CD4-positive, alpha-beta T cell (primary cell): ENCODE measurements at regions of chr12 and their contacts with region 1.

Region 1: GRCh38 chr12:48454667-48455066 is 17.7 kb upstream of the ANP32D start:
- DNase-seq: peak in 3 of 14 experiments; percentile 46 to 59 (median 51)
- ATAC-seq: peak; percentile 65
- H3K4me3 ChIP-seq: no peak overlapping the region
- H3K4me3 Mint-ChIP-seq: no peak overlapping the region
- H3K27ac ChIP-seq: no peak overlapping the region
- H3K27ac Mint-ChIP-seq: no peak overlapping the region
- H3K4me1 ChIP-seq: no peaks in the 10 kb centered on the region
- H3K4me1 Mint-ChIP-seq: no peaks in the 10 kb centered on the region
- H3K27me3 ChIP-seq: no peaks in the 10 kb centered on the region
- H3K27me3 Mint-ChIP-seq: peaks cover 21% of the 10 kb centered on the region
- CTCF ChIP-seq: peak; percentile 58

Region 2: GRCh38 chr12:47935184-47935583 is 519.5 kb before region 1 on chr12:
- CTCF ChIA-PET with region 1: no interaction called
- POLR2A ChIA-PET with region 1: no interaction called
- intact Hi-C with region 1: loop called in 1 of 2 experiments (anchors 10 kb)
- DNase-seq: no peak
- ATAC-seq: no peak
- H3K4me3 ChIP-seq: no peak overlapping the region
- H3K4me3 Mint-ChIP-seq: no peak overlapping the region
- H3K27ac ChIP-seq: no peak overlapping the region
- H3K27ac Mint-ChIP-seq: no peak overlapping the region
- H3K4me1 ChIP-seq: no peaks in the 10 kb centered on the region
- H3K4me1 Mint-ChIP-seq: no peaks in the 10 kb centered on the region
- H3K27me3 ChIP-seq: no peaks in the 10 kb centered on the region
- H3K27me3 Mint-ChIP-seq: peaks cover 3% of the 10 kb centered on the region
- CTCF ChIP-seq: no peak

Region 3: DNA sequence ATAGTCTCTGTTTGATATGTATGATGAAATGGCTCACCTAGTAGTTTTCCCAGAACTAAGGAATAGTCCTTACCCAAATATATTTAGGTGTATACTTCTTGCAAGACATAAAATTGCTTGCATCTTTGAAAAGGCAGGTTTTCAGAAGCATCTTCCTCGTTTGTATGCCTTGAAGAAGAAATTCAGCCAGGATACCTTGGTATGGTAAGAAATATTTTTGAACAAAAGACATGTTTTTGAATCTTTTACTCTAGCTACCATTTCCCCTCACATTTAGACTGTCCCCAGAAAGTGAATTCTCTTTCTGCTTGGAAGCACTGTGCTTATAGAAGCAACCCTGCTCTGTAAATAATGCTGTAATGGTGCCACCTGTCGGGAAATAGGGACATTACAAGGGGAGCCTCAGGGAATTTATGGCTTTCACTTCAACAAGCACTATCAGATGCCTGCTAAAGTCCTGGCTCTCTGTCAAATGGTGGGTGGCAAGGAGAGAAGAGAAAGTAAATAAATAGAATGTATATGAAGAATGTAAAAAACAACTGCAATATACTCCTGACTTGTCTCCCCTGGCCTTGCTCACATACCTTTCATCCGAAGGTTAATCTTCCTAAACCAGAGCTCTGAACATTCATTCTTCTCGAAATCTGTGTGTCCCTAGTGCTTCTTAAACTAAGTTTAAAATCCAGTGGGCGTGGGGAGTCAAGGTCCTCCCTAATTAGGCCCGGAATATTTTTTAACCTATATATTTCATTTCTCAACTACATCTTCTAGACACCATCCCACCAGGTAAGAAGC is 265.1 kb before region 1 on chr12:
- CTCF ChIA-PET with region 1: no interaction called
- POLR2A ChIA-PET with region 1: no interaction called
- intact Hi-C with region 1: loop called (anchors 2 to 5 kb)
- DNase-seq: peak; percentile 43 to 83 (median 66)
- ATAC-seq: peak; percentile 91
- H3K4me3 ChIP-seq: no peak overlapping the region
- H3K4me3 Mint-ChIP-seq: no peak overlapping the region
- H3K27ac ChIP-seq: no peak overlapping the region
- H3K27ac Mint-ChIP-seq: no peak overlapping the region
- H3K4me1 ChIP-seq: peaks cover 3% of the 10 kb centered on the region
- H3K4me1 Mint-ChIP-seq: no peaks in the 10 kb centered on the region
- H3K27me3 ChIP-seq: peaks cover 8 to 11% of the 10 kb centered on the region in 2 experiments
- H3K27me3 Mint-ChIP-seq: peaks cover 23% of the 10 kb centered on the region
- CTCF ChIP-seq: peak; percentile 80

Region 4: DNA sequence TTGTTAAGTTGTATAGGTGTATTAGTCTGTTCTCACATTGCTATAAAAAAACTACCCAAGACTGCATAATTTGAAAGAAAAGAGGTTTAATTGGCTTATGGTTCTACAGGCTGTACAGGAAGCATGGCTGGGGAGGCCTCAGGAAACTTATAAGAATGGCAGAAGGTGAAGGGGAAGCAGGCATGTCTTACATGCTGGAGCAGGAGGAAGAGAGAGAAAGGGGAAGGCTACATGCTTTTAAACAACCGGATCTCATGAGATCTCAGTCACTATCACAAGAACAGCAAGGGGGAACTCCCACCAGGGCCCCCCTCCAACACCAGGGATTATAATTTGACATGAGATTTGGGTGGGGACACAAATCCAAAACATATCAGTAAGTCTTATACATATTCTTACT is 191.1 kb before region 1 on chr12:
- CTCF ChIA-PET with region 1: no interaction called
- POLR2A ChIA-PET with region 1: no interaction called
- intact Hi-C with region 1: loop called in 1 of 2 experiments (anchors 10 kb)
- DNase-seq: no peak
- ATAC-seq: no peak
- H3K4me3 ChIP-seq: no peak overlapping the region
- H3K4me3 Mint-ChIP-seq: no peak overlapping the region
- H3K27ac ChIP-seq: no peak overlapping the region
- H3K27ac Mint-ChIP-seq: no peak overlapping the region
- H3K4me1 ChIP-seq: no peaks in the 10 kb centered on the region
- H3K4me1 Mint-ChIP-seq: no peaks in the 10 kb centered on the region
- H3K27me3 ChIP-seq: no peaks in the 10 kb centered on the region
- H3K27me3 Mint-ChIP-seq: peaks cover 24% of the 10 kb centered on the region
- CTCF ChIP-seq: no peak

Region 5: GRCh38 chr12:48542300-48542928 is 87.7 kb after region 1 on chr12:
- CTCF ChIA-PET with region 1: no interaction called
- POLR2A ChIA-PET with region 1: no interaction called
- intact Hi-C with region 1: no loop called
- DNase-seq: peak in 13 of 14 experiments; percentile 19 to 49 (median 41)
- ATAC-seq: no peak
- H3K4me3 ChIP-seq: no peak overlapping the region
- H3K4me3 Mint-ChIP-seq: no peak overlapping the region
- H3K27ac ChIP-seq: no peak overlapping the region
- H3K27ac Mint-ChIP-seq: no peak overlapping the region
- H3K4me1 ChIP-seq: no peaks in the 10 kb centered on the region
- H3K4me1 Mint-ChIP-seq: no peaks in the 10 kb centered on the region
- H3K27me3 ChIP-seq: no peaks in the 10 kb centered on the region
- H3K27me3 Mint-ChIP-seq: peaks cover 8% of the 10 kb centered on the region
- CTCF ChIP-seq: peak; percentile 43